Activated T-helper 2 cell treated with anti-CD3 and anti-CD28 coated beads, Interferon-gamma antibody, Interleukin-2, Interleukin-4, amounts not matched to agents 10 μg/mL and 5 μg/mL and 100 μg/mL, durations not matched to agents 14 hours and 24 hours and 36 hours (primary cell): ENCODE measurements at regions of chr19 and their contacts with region 1.

Region 1: GRCh38 chr19:43765109-43765876 is 10.5 kb upstream of the SMG9 start:
- DNase-seq: peak; percentile 79
- H3K4me3 Mint-ChIP-seq: peak overlapping the region; percentile 19
- H3K27ac Mint-ChIP-seq: peak overlapping the region; percentile 74
- H3K4me1 Mint-ChIP-seq: peaks cover 63% of the 10 kb centered on the region
- H3K27me3 Mint-ChIP-seq: no peaks in the 10 kb centered on the region

Region 2: DNA sequence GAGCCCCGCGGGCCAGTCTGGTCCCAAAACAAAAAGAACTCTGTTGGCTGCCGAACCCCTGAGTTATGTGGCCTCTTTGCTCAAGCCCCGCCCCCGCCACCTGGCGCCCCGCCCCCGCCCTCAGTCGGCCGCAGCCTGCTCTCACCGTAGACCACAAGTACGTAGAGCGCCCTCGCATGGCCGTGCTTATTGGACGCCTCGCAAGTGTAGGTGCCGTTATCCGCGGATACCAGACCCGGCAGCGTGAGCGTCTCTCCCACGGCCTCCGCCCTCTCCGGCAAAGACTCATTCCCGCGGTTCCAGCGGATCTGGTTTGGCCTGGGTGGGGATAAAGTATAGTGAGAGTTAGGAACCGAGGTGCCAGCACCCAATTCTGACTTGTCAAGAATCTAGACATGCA is 140.4 kb before region 1 on chr19:
- intact Hi-C with region 1: no loop called
- DNase-seq: peak; percentile 78
- H3K4me3 Mint-ChIP-seq: no peak overlapping the region
- H3K27ac Mint-ChIP-seq: no peak overlapping the region
- H3K4me1 Mint-ChIP-seq: peaks cover 22% of the 10 kb centered on the region
- H3K27me3 Mint-ChIP-seq: peaks cover 5% of the 10 kb centered on the region

Region 3: DNA sequence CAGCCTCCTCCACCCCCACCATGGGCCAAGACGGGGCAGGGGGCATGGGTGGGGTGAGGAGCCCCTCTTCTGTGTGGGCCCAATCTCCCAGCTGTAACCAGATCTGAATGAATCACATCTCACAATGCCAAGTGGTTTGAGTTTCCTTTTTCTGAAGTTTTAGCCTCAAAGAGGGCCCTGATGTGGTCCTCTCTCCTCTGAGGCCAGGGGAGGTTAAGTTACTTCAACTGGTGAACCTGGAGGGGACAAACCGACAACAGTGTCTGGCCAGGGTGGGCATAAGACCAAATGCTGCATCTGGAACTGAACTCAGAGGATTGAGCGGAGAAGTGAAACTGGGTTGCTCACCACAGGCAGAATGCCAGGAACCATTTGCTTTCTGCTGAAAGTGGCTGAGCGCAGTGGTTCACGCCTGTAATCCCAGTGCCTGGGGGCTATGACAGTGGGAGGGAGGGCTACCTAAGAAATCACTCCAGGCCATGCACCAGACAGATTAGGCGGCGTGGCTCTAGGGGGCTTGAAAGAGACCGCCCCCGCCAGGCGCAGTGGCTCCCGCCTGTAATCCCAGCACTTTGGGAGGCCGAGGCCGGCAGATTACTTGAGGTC is 64.8 kb before region 1 on chr19:
- intact Hi-C with region 1: loop called (anchors 1 kb)
- DNase-seq: no peak
- H3K4me3 Mint-ChIP-seq: peak overlapping the region; percentile 82
- H3K27ac Mint-ChIP-seq: peak overlapping the region; percentile 96
- H3K4me1 Mint-ChIP-seq: peaks cover 21% of the 10 kb centered on the region
- H3K27me3 Mint-ChIP-seq: peaks cover 19% of the 10 kb centered on the region